CD8-positive, alpha-beta memory T cell (primary cell): ENCODE measurements at regions of chr14 and their contacts with region 1.

Region 1: DNA sequence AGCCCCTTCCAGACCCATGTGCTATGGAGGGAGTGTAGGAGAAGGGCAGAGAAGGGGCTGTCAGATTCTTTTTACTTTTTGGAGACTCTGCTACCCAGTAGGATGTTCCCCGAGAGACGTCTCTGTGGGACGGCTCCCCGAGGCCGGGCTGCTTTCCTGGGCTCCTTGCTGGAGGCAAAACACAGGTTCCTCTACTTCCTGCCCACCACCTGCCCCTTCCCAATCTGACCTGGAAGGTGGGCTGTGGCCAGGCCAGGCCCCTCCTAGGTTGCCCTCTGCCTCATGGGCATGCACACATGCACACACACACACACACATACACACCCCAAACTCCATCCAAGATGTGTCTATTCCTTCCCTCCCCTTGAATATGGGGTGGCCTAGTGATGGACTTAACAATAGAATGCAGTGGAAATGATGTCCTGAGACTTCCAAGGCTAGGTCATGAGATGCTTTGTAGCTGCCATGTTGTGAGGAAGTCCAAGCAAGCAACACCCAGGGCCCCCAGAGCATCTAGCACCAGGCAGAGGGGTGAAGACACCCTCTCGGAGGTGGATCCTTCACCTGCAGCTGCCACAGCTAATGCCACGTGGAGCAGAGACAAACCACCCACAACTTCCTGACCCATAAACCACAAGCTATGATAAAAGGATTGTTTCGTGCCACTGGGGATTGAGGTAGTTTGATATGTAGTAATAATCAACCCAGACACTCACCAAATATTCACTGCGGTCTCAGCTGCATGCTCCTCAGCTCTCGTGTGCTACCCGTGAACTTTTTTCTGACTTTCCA is 1.6 kb upstream of the ASB2 start:
- DNase-seq: peak; percentile 42 to 89 (median 82)
- H3K4me3 ChIP-seq: peak overlapping the region; percentile 16
- H3K4me3 Mint-ChIP-seq: peak overlapping the region; percentile 41 to 80 (median 66)
- H3K27ac ChIP-seq: no peak overlapping the region
- H3K27ac Mint-ChIP-seq: peak overlapping the region; percentile 77 to 95 (median 88)
- H3K4me1 ChIP-seq: peaks cover 42% of the 10 kb centered on the region
- H3K4me1 Mint-ChIP-seq: peaks cover 43 to 72% (median 59%) of the 10 kb centered on the region in 3 donors
- H3K27me3 ChIP-seq: no peaks in the 10 kb centered on the region
- H3K27me3 Mint-ChIP-seq: peaks cover 0 to 2% of the 10 kb centered on the region in 2 donors

Region 2: GRCh38 chr14:93959239-93960107 is 18.5 kb before region 1 on chr14:
- CTCF ChIA-PET with region 1: interaction called, 177 read pairs
- POLR2A ChIA-PET with region 1: interaction called, 14 read pairs
- DNase-seq: peak; percentile 73 to 97 (median 90)
- H3K4me3 ChIP-seq: peak overlapping the region; percentile 3
- H3K4me3 Mint-ChIP-seq: peak overlapping the region; percentile 65 to 88 (median 80)
- H3K27ac ChIP-seq: peak overlapping the region; percentile 55
- H3K27ac Mint-ChIP-seq: peak overlapping the region; percentile 98 to 100 (median 99)
- H3K4me1 ChIP-seq: peaks cover 97% of the 10 kb centered on the region
- H3K4me1 Mint-ChIP-seq: peaks cover 94 to 99% (median 99%) of the 10 kb centered on the region in 3 donors
- H3K27me3 ChIP-seq: no peaks in the 10 kb centered on the region
- H3K27me3 Mint-ChIP-seq: no peaks in the 10 kb centered on the region

Region 3: GRCh38 chr14:94001501-94002396 is 23.8 kb after region 1 on chr14:
- CTCF ChIA-PET with region 1: interaction called, 12 read pairs
- POLR2A ChIA-PET with region 1: no interaction called
- DNase-seq: peak; percentile 40 to 69 (median 50)
- H3K4me3 ChIP-seq: peak overlapping the region; percentile 27
- H3K4me3 Mint-ChIP-seq: peak overlapping the region in 2 of 7 donors; percentile 10 to 28
- H3K27ac ChIP-seq: no peak overlapping the region
- H3K27ac Mint-ChIP-seq: no peak overlapping the region
- H3K4me1 ChIP-seq: peaks cover 7% of the 10 kb centered on the region
- H3K4me1 Mint-ChIP-seq: peaks cover 6 to 10% (median 7%) of the 10 kb centered on the region in 3 donors
- H3K27me3 ChIP-seq: no peaks in the 10 kb centered on the region
- H3K27me3 Mint-ChIP-seq: peaks cover 4 to 13% of the 10 kb centered on the region in 2 donors

Region 4: DNA sequence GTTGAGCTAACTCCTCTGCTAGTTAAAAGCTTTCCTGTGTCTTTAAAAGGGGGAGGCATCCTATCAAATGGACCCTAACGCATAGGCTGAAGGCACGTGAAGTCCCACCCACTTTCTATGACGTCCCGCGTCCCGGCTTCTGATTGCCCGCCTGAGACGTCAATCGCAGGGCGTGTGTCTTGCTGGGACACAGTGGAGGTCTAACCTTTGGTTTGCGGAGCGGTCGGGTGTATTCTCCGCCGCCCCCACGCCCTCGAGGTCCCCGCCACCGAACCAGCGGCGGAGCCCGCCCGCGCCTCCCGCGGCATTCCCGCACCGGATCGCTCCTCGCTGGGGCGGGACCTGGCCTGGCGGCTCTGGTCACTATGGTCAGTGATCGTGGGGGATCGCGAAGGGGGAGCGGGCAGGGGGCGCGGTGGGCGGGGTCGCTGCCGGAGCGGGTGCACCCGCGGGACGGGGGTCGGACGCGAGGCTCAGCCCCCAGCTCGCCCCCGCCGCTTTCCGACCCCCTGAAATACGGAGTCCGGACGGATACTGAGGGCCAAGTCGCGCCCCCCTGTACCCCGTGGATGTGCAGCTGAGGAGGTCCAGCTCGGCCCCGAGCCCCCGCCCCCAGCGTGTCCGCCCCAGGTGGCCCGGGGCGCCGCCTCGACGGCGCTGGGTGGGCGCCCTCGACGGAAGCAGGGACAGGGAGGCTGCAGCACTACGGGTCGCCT is 48.3 kb after region 1 on chr14 and contains the start of gene OTUB2:
- CTCF ChIA-PET with region 1: no interaction called
- POLR2A ChIA-PET with region 1: no interaction called
- DNase-seq: peak; percentile 90 to 96 (median 94)
- H3K4me3 ChIP-seq: peak within 1 kb of the TSS; percentile 57
- H3K4me3 Mint-ChIP-seq: peak within 1 kb of the TSS; percentile 71 to 94 (median 82)
- H3K27ac ChIP-seq: no peak within 1 kb of the TSS
- H3K27ac Mint-ChIP-seq: peak within 1 kb of the TSS in 4 of 8 donors; percentile 19 to 85 (median 82)
- H3K4me1 ChIP-seq: peaks cover 5% of the 10 kb centered on the region
- H3K4me1 Mint-ChIP-seq: peaks cover 21 to 36% (median 34%) of the 10 kb centered on the region in 3 donors
- H3K27me3 ChIP-seq: no peaks in the 10 kb centered on the region
- H3K27me3 Mint-ChIP-seq: peaks cover 0 to 3% of the 10 kb centered on the region in 2 donors
- total RNA-seq, gene OTUB2: 1.1 to 1.8 TPM